ENCODE measurements at regions of chr6 and their contacts with region 1.

Region 1: DNA sequence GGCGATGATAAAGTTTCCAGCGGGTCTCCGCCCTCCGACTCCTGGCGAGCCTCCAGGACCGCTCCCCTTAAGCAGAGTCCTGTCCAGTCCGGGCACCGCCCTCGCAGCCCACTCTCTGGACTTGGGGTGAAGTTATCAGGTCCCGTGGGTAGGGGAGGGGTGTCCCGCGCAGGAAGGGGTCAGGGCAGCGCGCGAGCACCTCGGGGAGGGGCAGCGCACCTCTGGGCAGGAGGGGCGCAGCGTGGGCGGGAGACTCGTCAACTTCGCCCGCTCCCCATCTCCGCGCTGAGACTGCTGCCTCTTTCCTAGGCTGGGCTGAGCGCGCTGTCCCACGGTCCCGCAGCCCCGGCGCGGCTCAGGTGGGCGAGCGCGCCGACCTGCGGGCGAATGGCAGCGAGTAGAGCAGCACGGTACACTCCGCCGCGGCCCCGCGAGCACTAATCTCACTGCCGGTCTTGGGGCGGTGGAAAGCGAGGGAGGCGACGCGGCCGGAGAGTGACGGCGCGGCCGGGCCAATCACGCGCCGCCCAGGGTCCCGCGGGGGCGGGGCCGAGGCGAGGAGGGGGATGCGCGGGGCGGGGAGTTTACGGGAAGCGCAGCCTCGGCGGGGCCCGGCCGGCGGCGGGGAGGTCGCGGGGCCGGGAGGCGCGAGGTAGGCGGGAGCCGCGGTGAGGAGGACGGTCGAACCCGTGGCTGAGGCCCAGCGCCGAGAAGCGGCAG is at the start of gene MAN1A1:
- DNase-seq: peak; percentile 93 to 96
- ATAC-seq: peak; percentile 96
- H3K4me3 ChIP-seq: peak within 1 kb of the TSS; percentile 79 to 90
- H3K27ac ChIP-seq: peak within 1 kb of the TSS; percentile 76 to 94
- H3K4me1 ChIP-seq: peaks cover 0 to 3% of the 10 kb centered on the region in 2 donors
- H3K27me3 ChIP-seq: no peaks in the 10 kb centered on the region
- total RNA-seq, gene MAN1A1: 57.8 to 76.0 TPM

Region 2: DNA sequence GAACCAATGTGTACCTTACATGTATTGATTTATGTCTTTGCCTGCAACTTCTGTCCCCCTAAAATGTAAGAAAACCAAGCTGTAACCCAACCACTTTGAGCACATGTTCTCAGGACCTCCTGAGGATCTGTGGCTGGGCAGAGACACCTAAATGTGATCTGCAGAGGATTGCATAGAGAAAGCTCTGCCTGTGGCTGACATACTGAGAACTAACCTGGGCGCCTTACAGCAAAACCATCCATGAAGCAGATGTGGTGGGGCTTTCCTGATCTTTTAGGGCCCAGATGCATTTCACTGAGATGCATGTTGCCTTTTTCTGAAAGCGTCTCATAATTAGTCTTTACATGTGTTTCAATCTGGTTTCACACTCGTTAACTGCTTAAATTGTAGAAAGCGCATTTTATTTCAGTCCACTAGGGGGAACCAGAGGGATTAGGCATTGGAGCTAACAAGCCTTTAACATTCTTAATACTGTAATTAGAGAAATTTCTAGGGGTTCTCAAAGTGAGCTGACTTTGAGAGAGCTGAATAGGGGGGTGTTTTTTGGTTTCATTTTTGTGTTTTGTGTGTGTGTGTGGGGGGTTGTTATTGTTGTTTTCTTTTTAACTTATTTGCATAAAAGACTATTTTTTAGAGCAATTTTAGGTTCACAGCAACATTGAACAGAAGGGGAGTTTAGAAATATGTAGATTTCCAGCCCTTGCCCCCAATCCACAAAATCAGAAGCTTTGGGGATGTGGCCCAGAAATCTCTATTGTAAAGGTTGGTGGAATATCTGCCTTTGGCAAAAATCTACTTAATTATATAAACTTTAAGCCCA is 220.1 kb before region 1 on chr6:
- intact Hi-C with region 1: loop called (anchors 5 kb)
- DNase-seq: no peak
- ATAC-seq: peak; percentile 82
- H3K4me3 ChIP-seq: no peak overlapping the region
- H3K27ac ChIP-seq: no peak overlapping the region
- H3K4me1 ChIP-seq: no peaks in the 10 kb centered on the region
- H3K27me3 ChIP-seq: no peaks in the 10 kb centered on the region

Region 3: GRCh38 chr6:119147101-119148053 is 202.1 kb before region 1 on chr6:
- intact Hi-C with region 1: loop called in 1 of 2 experiments (anchors 5 kb)
- DNase-seq: peak; percentile 81 to 84
- ATAC-seq: peak; percentile 79
- H3K4me3 ChIP-seq: no peak overlapping the region
- H3K27ac ChIP-seq: peak overlapping the region in 1 of 2 donors; percentile 46
- H3K4me1 ChIP-seq: peaks cover 0 to 3% of the 10 kb centered on the region in 2 donors
- H3K27me3 ChIP-seq: no peaks in the 10 kb centered on the region

Measured in aorta (tissue), 5 donors.